ENCODE measurements at regions of chr2 and their contacts with region 1.

Region 1: GRCh38 chr2:130355578-130356431 is at the start of gene PTPN18:
- DNase-seq: peak; percentile 66
- ATAC-seq: peak; percentile 93
- H3K4me3 Mint-ChIP-seq: peak within 1 kb of the TSS; percentile 73
- H3K27ac Mint-ChIP-seq: peak within 1 kb of the TSS; percentile 13
- H3K4me1 Mint-ChIP-seq: peaks cover 9% of the 10 kb centered on the region
- H3K27me3 Mint-ChIP-seq: no peaks in the 10 kb centered on the region
- CTCF ChIP-seq: peak; percentile 51
- total RNA-seq, gene PTPN18: 32.9 to 35.4 TPM

Region 2: DNA sequence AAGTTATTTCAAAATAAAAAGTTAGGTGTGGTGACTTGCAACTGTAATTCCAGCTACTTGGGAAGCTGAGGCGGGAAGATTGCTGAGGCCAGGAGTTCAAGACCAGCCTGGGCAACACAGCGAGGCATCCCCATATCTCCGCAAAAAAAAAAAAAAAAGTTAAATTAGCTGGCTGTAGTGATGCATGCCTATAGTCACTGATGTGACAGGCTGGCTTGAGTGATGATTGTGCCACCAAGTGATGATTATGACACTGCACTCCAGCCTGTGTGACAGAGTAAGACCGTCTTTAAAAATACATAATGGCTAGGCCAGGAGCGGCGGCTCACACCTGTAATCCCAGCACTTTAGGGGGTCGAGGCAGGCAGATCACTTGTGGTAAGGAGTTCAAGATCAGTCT is 185.9 kb before region 1 on chr2:
- CTCF ChIA-PET with region 1: no interaction called
- POLR2A ChIA-PET with region 1: no interaction called
- intact Hi-C with region 1: no loop called
- DNase-seq: no peak
- ATAC-seq: no peak
- H3K4me3 Mint-ChIP-seq: no peak overlapping the region
- H3K27ac Mint-ChIP-seq: no peak overlapping the region
- H3K4me1 Mint-ChIP-seq: peaks cover 6% of the 10 kb centered on the region
- H3K27me3 Mint-ChIP-seq: no peaks in the 10 kb centered on the region
- CTCF ChIP-seq: no peak

Region 3: GRCh38 chr2:130372055-130372832 is 16.4 kb after region 1 on chr2:
- CTCF ChIA-PET with region 1: interaction called, 10 read pairs
- POLR2A ChIA-PET with region 1: interaction called, 5 read pairs
- intact Hi-C with region 1: no loop called
- DNase-seq: peak; percentile 79
- ATAC-seq: peak; percentile 65
- H3K4me3 Mint-ChIP-seq: peak overlapping the region; percentile 91
- H3K27ac Mint-ChIP-seq: peak overlapping the region; percentile 97
- H3K4me1 Mint-ChIP-seq: peaks cover 54% of the 10 kb centered on the region
- H3K27me3 Mint-ChIP-seq: no peaks in the 10 kb centered on the region
- CTCF ChIP-seq: peak; percentile 95

Measured in activated CD8-positive, alpha-beta T cell treated with anti-CD3 and anti-CD28 coated beads for 36 hours (primary cell).